ENCODE measurements at regions of chr11 and their contacts with region 1.

Region 1: DNA sequence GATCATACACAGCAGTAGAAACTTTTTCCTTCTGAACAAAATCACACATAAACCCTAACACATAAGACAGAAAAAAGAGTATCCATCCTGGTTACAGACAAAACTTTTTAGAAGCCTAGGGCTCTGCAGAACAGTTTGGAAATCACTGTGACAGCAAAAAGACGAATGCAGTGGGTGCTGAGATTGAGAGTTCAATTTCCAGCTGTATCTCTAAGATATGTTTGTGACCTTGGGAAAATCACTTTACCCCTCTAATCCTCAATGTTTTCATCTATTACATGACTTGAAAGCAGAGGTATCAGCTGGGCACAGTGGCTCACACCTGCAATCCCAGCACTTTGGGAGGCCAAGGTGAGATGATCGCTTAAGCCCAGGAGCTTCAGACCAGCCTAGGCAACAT is 128.5 kb downstream of the SIK3 start:
- DNase-seq: no peak
- H3K4me3 ChIP-seq: no peak overlapping the region
- H3K27ac ChIP-seq: no peak overlapping the region
- H3K4me1 ChIP-seq: peaks cover 7% of the 10 kb centered on the region
- H3K27me3 ChIP-seq: no peaks in the 10 kb centered on the region
- CTCF ChIP-seq: no peak

Region 2: DNA sequence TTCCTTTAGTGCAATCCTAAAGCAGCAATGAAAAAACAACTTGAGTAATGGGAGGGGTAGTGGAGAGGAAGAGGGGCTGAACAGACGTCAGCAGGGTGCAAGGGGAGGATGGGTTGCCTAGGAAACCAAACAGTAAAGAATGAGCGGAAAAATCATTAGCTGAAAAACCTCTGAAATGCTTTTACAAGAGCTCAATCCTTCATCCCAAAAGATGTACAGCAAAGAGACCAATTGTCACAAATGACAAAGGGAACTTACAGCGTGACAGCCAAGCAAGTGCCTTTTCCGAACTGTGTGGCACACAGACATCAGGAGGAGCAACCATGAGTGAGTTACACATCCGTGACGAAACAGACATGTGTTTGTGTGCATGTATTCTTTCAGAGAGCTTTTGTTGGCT is 23.9 kb after region 1 on chr11:
- CTCF ChIA-PET with region 1: no interaction called
- POLR2A ChIA-PET with region 1: interaction called, 16 read pairs
- intact Hi-C with region 1: no loop called
- DNase-seq: no peak
- H3K4me3 ChIP-seq: no peak overlapping the region
- H3K27ac ChIP-seq: no peak overlapping the region
- H3K4me1 ChIP-seq: no peaks in the 10 kb centered on the region
- H3K27me3 ChIP-seq: no peaks in the 10 kb centered on the region
- CTCF ChIP-seq: no peak

Region 3: DNA sequence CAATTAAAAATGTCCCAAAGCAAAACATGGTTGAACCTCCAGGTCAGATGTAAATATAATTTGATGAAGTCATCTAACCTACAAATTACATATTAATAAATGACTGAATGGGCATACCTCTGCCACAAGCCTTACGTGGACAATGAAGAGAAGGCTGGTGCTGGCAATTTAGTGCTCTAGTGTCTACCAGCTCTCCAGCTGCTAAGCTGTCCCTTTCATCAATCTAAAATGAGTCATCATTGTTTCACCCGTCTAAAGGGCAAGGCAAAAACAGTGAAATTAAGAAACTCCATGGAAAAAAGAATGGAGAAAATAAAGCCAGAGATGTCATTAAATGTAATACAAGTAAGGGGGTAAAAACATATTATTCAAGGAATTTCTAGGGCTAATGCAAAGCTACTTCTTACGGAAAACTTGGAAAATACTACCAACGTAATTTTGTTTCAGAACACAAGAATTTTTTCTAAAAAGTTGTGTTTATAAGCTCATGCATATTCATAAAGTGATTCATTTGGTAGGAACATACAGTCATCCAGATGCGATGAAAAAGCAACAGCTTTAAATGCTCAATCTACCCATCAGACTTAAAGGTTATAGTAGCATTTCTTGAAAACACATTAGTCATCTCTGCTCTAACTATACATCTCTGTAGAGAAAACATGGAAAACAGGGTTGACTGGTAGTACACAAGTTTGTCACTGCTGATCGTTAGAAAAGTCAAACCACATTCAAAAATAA is 57.1 kb after region 1 on chr11:
- CTCF ChIA-PET with region 1: no interaction called
- POLR2A ChIA-PET with region 1: interaction called, 16 read pairs
- intact Hi-C with region 1: no loop called
- DNase-seq: peak in 1 of 2 experiments; percentile 93
- H3K4me3 ChIP-seq: no peak overlapping the region; the same call in 1 of the 2 replicates
- H3K27ac ChIP-seq: peak overlapping the region; percentile 73
- H3K4me1 ChIP-seq: peaks cover 46% of the 10 kb centered on the region
- H3K27me3 ChIP-seq: no peaks in the 10 kb centered on the region
- CTCF ChIP-seq: no peak